CD4-positive, alpha-beta T cell (primary cell): ENCODE measurements at regions of chr1 and their contacts with region 1.

Region 1: DNA sequence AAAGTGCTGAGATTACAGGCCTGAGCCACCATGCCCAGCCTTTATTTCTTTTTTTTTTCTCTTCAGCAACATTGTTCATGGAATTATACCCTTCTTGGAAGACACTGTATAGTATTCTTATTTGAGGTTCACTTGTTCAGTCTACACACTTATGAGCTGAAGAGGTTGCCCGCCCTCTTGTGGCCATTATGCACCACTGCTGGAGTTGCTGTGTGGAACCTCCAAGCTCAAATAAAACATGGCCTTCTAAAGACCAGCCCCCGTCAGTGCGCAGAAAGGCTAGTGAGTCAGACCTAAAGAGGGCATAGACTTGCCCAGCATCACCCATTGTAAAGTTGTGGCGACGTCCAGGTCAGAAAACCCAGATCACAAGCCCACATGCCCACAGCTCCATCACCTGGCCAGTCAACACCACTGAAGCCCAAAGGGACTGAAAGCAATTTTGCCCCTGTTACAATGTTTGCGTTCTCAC is 20.4 kb downstream of the LURAP1 start:
- DNase-seq: peak; percentile 30 to 83 (median 42)
- ATAC-seq: peak; percentile 92
- H3K4me3 ChIP-seq: no peak overlapping the region
- H3K4me3 Mint-ChIP-seq: no peak overlapping the region
- H3K27ac ChIP-seq: no peak overlapping the region
- H3K27ac Mint-ChIP-seq: no peak overlapping the region
- H3K4me1 ChIP-seq: peaks cover 4% of the 10 kb centered on the region
- H3K4me1 Mint-ChIP-seq: no peaks in the 10 kb centered on the region
- H3K27me3 ChIP-seq: no peaks in the 10 kb centered on the region
- H3K27me3 Mint-ChIP-seq: no peaks in the 10 kb centered on the region
- CTCF ChIP-seq: peak; percentile 90

Region 2: GRCh38 chr1:46036894-46037839 is 186.3 kb before region 1 on chr1:
- CTCF ChIA-PET with region 1: interaction called, 14 read pairs
- POLR2A ChIA-PET with region 1: no interaction called
- intact Hi-C with region 1: loop called (anchors 1 kb)
- DNase-seq: peak; percentile 71 to 91 (median 83)
- ATAC-seq: peak; percentile 75
- H3K4me3 ChIP-seq: no peak overlapping the region
- H3K4me3 Mint-ChIP-seq: no peak overlapping the region
- H3K27ac ChIP-seq: no peak overlapping the region
- H3K27ac Mint-ChIP-seq: no peak overlapping the region
- H3K4me1 ChIP-seq: peaks cover 6% of the 10 kb centered on the region
- H3K4me1 Mint-ChIP-seq: no peaks in the 10 kb centered on the region
- H3K27me3 ChIP-seq: no peaks in the 10 kb centered on the region
- H3K27me3 Mint-ChIP-seq: no peaks in the 10 kb centered on the region
- CTCF ChIP-seq: peak; percentile 99

Region 3: GRCh38 chr1:46179138-46180081 is 44.1 kb before region 1 on chr1:
- CTCF ChIA-PET with region 1: interaction called, 5 read pairs
- POLR2A ChIA-PET with region 1: no interaction called
- intact Hi-C with region 1: loop called (anchors 1 to 2 kb)
- DNase-seq: peak; percentile 47 to 83 (median 58)
- ATAC-seq: peak; percentile 81
- H3K4me3 ChIP-seq: no peak overlapping the region
- H3K4me3 Mint-ChIP-seq: no peak overlapping the region
- H3K27ac ChIP-seq: no peak overlapping the region
- H3K27ac Mint-ChIP-seq: no peak overlapping the region
- H3K4me1 ChIP-seq: peaks cover 7% of the 10 kb centered on the region
- H3K4me1 Mint-ChIP-seq: no peaks in the 10 kb centered on the region
- H3K27me3 ChIP-seq: peaks cover 0 to 3% of the 10 kb centered on the region in 2 experiments
- H3K27me3 Mint-ChIP-seq: no peaks in the 10 kb centered on the region
- CTCF ChIP-seq: peak; percentile 93

Region 4: DNA sequence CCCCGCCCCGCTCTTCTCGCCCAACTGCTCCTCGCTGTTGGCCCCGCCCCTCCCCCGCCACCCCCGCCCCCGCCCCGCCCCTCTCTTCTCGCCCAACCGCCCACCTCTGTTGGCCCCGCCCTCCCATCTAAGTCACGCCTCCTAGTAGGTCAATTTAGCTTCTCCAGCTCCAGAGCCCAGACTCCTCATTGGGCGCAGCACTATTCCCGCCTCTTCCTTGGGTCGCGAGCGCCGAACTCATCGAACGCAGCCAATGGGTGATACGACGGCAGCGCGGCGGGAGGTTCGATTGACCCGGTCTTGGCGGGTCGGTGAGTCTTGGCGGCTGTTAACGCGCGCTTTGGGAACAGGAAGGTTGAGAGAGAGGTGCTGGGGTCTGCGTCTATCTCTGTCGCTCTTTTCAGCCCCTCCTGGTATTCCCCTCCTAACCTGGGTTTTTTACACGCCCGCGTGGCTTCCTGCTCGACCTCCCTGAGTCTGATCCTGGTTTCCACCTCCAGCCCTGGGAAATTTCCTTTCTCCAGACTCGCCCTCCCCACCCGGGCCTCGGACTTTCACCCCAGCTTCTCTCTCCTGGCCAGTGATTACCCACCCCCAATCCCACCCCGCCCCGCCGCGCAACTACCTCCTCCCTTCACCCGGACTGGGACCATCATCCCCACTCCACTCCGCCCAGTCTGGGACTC is 24.1 kb after region 1 on chr1 and contains the start of gene RAD54L:
- CTCF ChIA-PET with region 1: interaction called, 4 read pairs
- POLR2A ChIA-PET with region 1: no interaction called
- intact Hi-C with region 1: loop called in 1 of 2 experiments (anchors 1 kb)
- DNase-seq: peak; percentile 92 to 99 (median 94)
- ATAC-seq: peak; percentile 96
- H3K4me3 ChIP-seq: peak within 1 kb of the TSS; percentile 83
- H3K4me3 Mint-ChIP-seq: peak within 1 kb of the TSS; percentile 89
- H3K27ac ChIP-seq: no peak within 1 kb of the TSS
- H3K27ac Mint-ChIP-seq: peak within 1 kb of the TSS; percentile 36
- H3K4me1 ChIP-seq: peaks cover 21% of the 10 kb centered on the region
- H3K4me1 Mint-ChIP-seq: peaks cover 26% of the 10 kb centered on the region
- H3K27me3 ChIP-seq: no peaks in the 10 kb centered on the region
- H3K27me3 Mint-ChIP-seq: no peaks in the 10 kb centered on the region
- CTCF ChIP-seq: no peak
- total RNA-seq, gene RAD54L: 0.33 to 1.0 TPM

Region 5: DNA sequence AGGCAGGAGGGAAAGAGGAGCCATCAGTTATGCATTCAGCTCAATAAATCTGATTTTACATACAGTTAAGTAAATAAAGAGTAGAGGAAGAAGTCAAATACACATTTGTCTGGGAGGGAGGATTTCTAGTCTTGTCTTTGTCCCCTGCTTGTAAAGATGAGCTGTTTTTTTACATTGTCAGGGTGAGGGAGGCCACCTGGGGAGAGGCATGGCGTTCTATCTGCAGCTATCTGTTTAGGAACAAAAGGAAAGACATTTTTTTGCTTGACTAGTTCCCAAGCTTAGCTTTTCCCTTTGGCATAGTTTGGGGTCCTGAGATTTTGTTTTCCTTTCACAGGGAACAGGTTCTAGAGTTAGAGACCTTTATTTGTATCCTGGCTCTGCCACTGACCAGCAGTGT is 39.0 kb after region 1 on chr1:
- CTCF ChIA-PET with region 1: no interaction called
- POLR2A ChIA-PET with region 1: no interaction called
- intact Hi-C with region 1: no loop called
- DNase-seq: no peak
- ATAC-seq: no peak
- H3K4me3 ChIP-seq: no peak overlapping the region
- H3K4me3 Mint-ChIP-seq: no peak overlapping the region
- H3K27ac ChIP-seq: no peak overlapping the region
- H3K27ac Mint-ChIP-seq: no peak overlapping the region
- H3K4me1 ChIP-seq: no peaks in the 10 kb centered on the region
- H3K4me1 Mint-ChIP-seq: no peaks in the 10 kb centered on the region
- H3K27me3 ChIP-seq: no peaks in the 10 kb centered on the region
- H3K27me3 Mint-ChIP-seq: no peaks in the 10 kb centered on the region
- CTCF ChIP-seq: no peak

Region 6: DNA sequence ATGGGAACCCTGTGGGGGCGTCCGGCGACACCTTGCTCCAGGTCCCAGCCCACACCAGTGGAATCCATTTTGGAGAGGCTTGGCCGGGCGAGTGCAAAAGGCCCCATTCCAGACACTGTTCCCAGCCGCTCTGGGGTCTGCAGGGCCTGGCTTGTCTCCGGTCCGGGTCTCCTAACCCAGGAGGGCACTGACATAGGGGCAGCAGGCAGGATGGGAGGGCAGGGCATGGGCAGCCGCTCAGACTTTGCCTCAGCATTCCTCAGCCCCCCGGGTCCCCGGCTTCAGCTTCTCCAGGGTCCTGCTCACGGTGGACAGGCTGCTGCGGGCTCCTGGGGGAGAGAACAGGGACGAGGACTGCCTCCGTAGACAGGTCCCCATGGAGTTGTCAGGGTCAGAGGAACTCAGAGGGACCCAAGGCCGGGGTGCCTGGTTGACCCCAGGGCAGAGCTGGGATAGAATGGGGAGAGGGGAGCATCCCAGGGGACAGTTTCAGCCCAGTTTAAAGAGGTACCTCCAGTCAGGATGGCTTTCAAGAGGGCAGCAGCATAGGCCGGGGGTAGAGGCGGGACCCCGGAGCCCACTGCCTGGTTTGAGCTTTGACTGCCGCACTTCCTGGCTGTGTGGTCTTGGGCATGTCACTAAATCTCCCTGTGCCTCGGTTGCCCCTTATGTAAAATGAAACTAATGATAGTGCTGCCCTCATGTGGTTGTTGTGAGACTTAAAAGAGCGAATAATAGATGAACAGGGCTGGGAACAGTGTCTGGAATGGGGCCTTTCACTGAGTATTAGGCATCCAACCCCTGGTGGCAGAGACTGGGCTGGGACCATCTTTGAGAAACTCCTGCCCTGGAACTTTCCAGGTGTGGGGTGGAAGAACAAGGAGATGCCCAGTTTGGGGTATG is 324.2 kb after region 1 on chr1:
- CTCF ChIA-PET with region 1: no interaction called
- POLR2A ChIA-PET with region 1: no interaction called
- intact Hi-C with region 1: no loop called
- DNase-seq: peak in 3 of 14 experiments; percentile 49 to 56 (median 53)
- ATAC-seq: no peak
- H3K4me3 ChIP-seq: no peak overlapping the region
- H3K4me3 Mint-ChIP-seq: no peak overlapping the region
- H3K27ac ChIP-seq: no peak overlapping the region
- H3K27ac Mint-ChIP-seq: no peak overlapping the region
- H3K4me1 ChIP-seq: peaks cover 27% of the 10 kb centered on the region
- H3K4me1 Mint-ChIP-seq: peaks cover 10% of the 10 kb centered on the region
- H3K27me3 ChIP-seq: peaks cover 38 to 43% of the 10 kb centered on the region in 2 experiments
- H3K27me3 Mint-ChIP-seq: peaks cover 55% of the 10 kb centered on the region
- CTCF ChIP-seq: no peak